B cell (primary cell): ENCODE measurements at regions of chr1 and their contacts with region 1.

Region 1: GRCh38 chr1:204506961-204507387 is 9.2 kb upstream of the MDM4 start:
- DNase-seq: peak; percentile 97
- ATAC-seq: peak; percentile 75
- H3K4me3 ChIP-seq: peak overlapping the region; percentile 51 to 90 (median 67)
- H3K4me3 Mint-ChIP-seq: peak overlapping the region; percentile 97
- H3K27ac ChIP-seq: peak overlapping the region; percentile 94 to 99
- H3K27ac Mint-ChIP-seq: peak overlapping the region; percentile 99
- H3K4me1 ChIP-seq: peaks cover 48 to 52% of the 10 kb centered on the region in 2 donors
- H3K4me1 Mint-ChIP-seq: peaks cover 62% of the 10 kb centered on the region
- H3K27me3 ChIP-seq: no peaks in the 10 kb centered on the region
- H3K27me3 Mint-ChIP-seq: no peaks in the 10 kb centered on the region
- CTCF ChIP-seq: no peak

Region 2: GRCh38 chr1:203290261-203291089 is 1216.5 kb before region 1 on chr1:
- CTCF ChIA-PET with region 1: no interaction called
- POLR2A ChIA-PET with region 1: no interaction called
- intact Hi-C with region 1: loop called (anchors 5 kb)
- DNase-seq: peak; percentile 98
- ATAC-seq: peak; percentile 40
- H3K4me3 ChIP-seq: peak overlapping the region; percentile 45 to 66 (median 56)
- H3K4me3 Mint-ChIP-seq: peak overlapping the region; percentile 88
- H3K27ac ChIP-seq: peak overlapping the region; percentile 99 to 100
- H3K27ac Mint-ChIP-seq: peak overlapping the region; percentile 95
- H3K4me1 ChIP-seq: peaks cover 70 to 90% of the 10 kb centered on the region in 2 donors
- H3K4me1 Mint-ChIP-seq: peaks cover 87% of the 10 kb centered on the region
- H3K27me3 ChIP-seq: no peaks in the 10 kb centered on the region
- H3K27me3 Mint-ChIP-seq: no peaks in the 10 kb centered on the region
- CTCF ChIP-seq: no peak

Region 3: GRCh38 chr1:204335085-204335484 is 171.9 kb before region 1 on chr1:
- CTCF ChIA-PET with region 1: no interaction called
- POLR2A ChIA-PET with region 1: no interaction called
- intact Hi-C with region 1: no loop called
- DNase-seq: no peak
- ATAC-seq: no peak
- H3K4me3 ChIP-seq: no peak overlapping the region
- H3K4me3 Mint-ChIP-seq: no peak overlapping the region
- H3K27ac ChIP-seq: no peak overlapping the region
- H3K27ac Mint-ChIP-seq: no peak overlapping the region
- H3K4me1 ChIP-seq: no peaks in the 10 kb centered on the region
- H3K4me1 Mint-ChIP-seq: no peaks in the 10 kb centered on the region
- H3K27me3 ChIP-seq: peaks cover 0 to 13% (median 1%) of the 10 kb centered on the region in 4 experiments
- H3K27me3 Mint-ChIP-seq: peaks cover 18% of the 10 kb centered on the region
- CTCF ChIP-seq: no peak

Region 4: DNA sequence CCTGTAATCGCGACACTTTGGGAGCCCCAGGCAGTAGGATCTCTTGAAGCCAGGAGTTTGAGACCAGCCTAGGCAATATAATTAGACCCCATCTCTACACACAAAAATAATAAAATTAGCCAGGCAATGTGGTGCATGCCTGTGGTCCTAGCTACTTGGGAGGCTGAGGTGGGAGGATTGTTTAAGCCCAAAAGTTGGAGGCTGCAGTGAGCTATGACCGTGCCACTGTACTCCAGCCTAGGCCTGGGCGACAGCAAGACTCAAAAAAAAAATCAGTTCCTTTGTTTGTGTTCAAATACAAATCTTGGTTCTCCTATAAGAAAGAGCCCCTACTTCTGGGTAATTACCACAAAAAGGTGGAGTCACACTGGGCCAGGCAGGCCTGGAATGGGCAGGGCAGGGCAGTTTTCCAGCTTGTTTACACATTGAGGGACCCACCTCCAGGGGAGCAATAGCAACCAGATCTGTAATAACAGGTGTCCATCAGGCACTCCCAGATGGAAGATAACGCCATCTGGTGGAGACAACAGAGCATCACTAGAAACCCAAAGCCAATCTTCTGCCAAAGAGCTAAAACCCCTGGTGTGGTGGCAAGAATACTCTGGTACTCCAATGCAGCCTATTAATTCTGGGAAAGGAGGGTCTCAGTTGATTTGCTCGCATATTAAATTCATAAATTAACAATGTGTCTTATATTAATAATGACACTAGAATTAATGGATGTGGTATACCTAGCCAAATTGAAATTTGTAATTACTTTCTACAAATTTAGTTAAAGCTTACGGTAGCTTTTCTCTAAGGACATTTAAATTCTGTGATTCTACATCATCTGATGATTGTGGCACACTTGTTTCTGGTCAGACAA is 108.5 kb before region 1 on chr1:
- CTCF ChIA-PET with region 1: interaction called, 11 read pairs
- POLR2A ChIA-PET with region 1: interaction called, 4 read pairs
- intact Hi-C with region 1: no loop called
- DNase-seq: peak; percentile 81
- ATAC-seq: peak; percentile 95
- H3K4me3 ChIP-seq: no peak overlapping the region
- H3K4me3 Mint-ChIP-seq: no peak overlapping the region
- H3K27ac ChIP-seq: peak overlapping the region; percentile 46 to 59
- H3K27ac Mint-ChIP-seq: peak overlapping the region; percentile 84
- H3K4me1 ChIP-seq: peaks cover 0 to 4% of the 10 kb centered on the region in 2 donors
- H3K4me1 Mint-ChIP-seq: peaks cover 2% of the 10 kb centered on the region
- H3K27me3 ChIP-seq: no peaks in the 10 kb centered on the region
- H3K27me3 Mint-ChIP-seq: no peaks in the 10 kb centered on the region
- CTCF ChIP-seq: peak; percentile 85

Region 5: DNA sequence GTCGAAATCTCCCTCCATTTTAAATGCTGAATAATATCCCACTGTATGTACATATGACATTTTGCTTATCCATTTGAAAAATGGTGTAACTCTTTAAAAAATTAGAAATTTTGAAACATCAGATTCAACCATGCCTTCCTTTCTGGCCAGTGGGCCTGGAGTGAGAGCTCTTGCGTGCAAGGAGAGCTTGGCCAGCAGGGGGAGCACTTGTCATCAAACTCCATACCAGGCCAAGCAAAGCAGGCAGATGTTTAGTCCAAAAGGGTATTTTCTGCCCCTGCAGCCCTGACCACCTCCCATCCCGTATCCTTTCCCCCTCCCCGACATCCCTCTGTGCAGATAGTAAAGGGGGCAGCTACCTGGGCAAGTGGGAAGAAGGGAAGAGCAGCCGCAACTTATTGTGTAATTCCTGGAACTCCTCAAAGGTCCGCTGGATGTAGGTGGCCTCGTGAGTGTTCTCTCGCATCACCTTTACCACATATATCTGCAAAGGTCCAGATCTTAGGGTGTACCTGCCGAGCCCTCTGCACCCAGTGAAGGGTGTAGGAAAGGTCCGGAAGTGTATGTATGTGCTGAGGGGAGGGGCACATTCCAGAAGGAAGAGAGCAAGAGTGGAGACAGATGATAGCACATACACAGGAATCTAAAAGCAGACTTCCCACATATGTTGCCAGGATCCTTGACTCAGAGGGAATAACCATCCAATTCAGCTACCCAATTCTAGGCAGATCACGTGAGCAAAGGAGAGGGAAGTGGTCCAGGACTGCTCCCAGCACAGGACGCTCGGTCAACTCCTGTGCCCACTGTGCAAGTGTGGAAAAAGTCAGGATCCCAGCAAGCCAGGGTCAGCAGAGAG is 75.4 kb before region 1 on chr1:
- CTCF ChIA-PET with region 1: interaction called, 1,884 read pairs
- POLR2A ChIA-PET with region 1: interaction called, 5 read pairs
- intact Hi-C with region 1: loop called (anchors 1 kb)
- DNase-seq: peak; percentile 84
- ATAC-seq: peak; percentile 77
- H3K4me3 ChIP-seq: no peak overlapping the region
- H3K4me3 Mint-ChIP-seq: no peak overlapping the region
- H3K27ac ChIP-seq: no peak overlapping the region
- H3K27ac Mint-ChIP-seq: peak overlapping the region; percentile 1
- H3K4me1 ChIP-seq: no peaks in the 10 kb centered on the region
- H3K4me1 Mint-ChIP-seq: no peaks in the 10 kb centered on the region
- H3K27me3 ChIP-seq: no peaks in the 10 kb centered on the region
- H3K27me3 Mint-ChIP-seq: no peaks in the 10 kb centered on the region
- CTCF ChIP-seq: peak; percentile 93

Region 6: DNA sequence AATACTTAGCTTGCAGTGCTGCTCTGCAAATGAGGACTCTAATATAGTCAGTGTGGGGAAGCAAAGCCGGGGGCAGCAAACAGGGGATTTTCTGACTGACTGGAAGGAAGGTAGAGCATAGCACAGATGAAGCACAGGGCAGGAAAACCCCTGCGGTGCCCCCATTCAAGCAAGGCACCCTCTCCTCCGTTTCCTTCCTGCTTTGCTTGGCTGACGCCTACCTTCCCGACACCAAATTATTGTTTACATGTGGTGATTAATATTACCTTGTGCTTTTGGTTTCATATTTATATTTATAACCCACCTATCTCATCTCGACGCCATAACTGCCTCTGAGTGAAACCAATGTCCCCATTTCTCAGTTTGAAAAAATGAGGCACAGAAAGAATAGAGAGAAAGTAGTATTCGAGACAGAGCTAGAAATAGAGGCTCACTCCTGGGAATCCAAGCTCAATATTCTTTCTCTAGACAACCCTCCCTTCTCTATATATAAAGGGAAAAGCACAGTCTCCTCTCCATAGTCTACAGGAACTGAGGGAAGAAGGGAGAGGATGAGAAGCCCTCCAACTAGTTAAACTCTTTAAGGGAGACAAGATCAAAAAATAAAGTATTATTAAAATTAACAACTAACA is 53.7 kb before region 1 on chr1:
- CTCF ChIA-PET with region 1: interaction called, 1,884 read pairs
- POLR2A ChIA-PET with region 1: interaction called, 10 read pairs
- intact Hi-C with region 1: no loop called
- DNase-seq: peak; percentile 94
- ATAC-seq: peak; percentile 90
- H3K4me3 ChIP-seq: peak overlapping the region in 3 of 5 experiments; percentile 19 to 58 (median 25)
- H3K4me3 Mint-ChIP-seq: peak overlapping the region; percentile 74
- H3K27ac ChIP-seq: peak overlapping the region; percentile 96
- H3K27ac Mint-ChIP-seq: peak overlapping the region; percentile 84
- H3K4me1 ChIP-seq: peaks cover 83 to 90% of the 10 kb centered on the region in 2 donors
- H3K4me1 Mint-ChIP-seq: peaks cover 90% of the 10 kb centered on the region
- H3K27me3 ChIP-seq: no peaks in the 10 kb centered on the region
- H3K27me3 Mint-ChIP-seq: no peaks in the 10 kb centered on the region
- CTCF ChIP-seq: no peak

Region 7: DNA sequence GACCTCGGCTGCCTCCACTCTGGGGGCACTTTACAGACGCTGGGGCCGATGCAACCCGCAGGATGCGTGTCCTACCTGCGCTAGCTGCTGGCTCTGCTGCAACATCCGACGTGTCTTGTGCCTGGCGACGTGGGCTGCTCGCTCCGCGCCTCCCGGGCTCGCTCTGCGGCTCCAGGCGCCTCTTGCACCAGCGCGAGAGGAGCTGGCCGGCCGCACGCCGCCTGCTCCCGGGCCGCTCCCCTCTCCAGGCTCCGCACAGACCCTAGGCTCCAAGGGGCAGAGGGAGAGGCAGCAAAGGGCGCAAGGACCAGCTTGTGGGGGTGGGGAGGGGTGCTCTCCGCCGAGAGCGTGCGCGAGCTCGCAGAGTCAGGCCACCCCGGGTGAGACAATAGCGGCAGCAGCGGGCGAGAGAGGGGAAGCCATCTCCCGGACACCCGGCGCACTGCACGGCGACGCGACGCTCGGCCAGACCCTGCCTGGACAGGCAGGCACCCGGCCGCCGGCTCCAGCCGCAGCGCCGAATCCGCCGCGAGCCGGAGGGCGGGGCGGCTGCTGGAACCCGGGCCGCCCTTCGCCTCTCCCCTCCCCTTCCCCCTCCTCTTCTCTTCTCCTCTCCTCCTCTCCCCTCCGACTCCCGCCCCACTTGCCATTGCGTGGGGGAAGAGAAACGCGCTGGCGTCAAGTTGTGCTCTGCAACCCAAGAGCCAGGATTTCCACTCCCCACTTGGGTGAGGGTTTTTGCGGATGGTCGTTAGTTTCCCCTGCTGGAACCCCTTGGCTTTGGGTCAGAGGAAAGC is 12.5 kb before region 1 on chr1 and contains the start of gene PIK3C2B:
- CTCF ChIA-PET with region 1: interaction called, 374 read pairs
- POLR2A ChIA-PET with region 1: interaction called, 25 read pairs
- intact Hi-C with region 1: loop called (anchors 1 kb)
- DNase-seq: peak; percentile 87
- ATAC-seq: peak; percentile 81
- H3K4me3 ChIP-seq: peak within 1 kb of the TSS; percentile 84 to 98 (median 92)
- H3K4me3 Mint-ChIP-seq: peak within 1 kb of the TSS; percentile 97
- H3K27ac ChIP-seq: peak within 1 kb of the TSS; percentile 78 to 79
- H3K27ac Mint-ChIP-seq: peak within 1 kb of the TSS; percentile 96
- H3K4me1 ChIP-seq: peaks cover 73 to 88% of the 10 kb centered on the region in 2 donors
- H3K4me1 Mint-ChIP-seq: peaks cover 80% of the 10 kb centered on the region
- H3K27me3 ChIP-seq: no peaks in the 10 kb centered on the region
- H3K27me3 Mint-ChIP-seq: no peaks in the 10 kb centered on the region
- CTCF ChIP-seq: peak; percentile 61
- total RNA-seq, gene PIK3C2B: 90.3 and 93.7 TPM in 2 replicates

Region 8: DNA sequence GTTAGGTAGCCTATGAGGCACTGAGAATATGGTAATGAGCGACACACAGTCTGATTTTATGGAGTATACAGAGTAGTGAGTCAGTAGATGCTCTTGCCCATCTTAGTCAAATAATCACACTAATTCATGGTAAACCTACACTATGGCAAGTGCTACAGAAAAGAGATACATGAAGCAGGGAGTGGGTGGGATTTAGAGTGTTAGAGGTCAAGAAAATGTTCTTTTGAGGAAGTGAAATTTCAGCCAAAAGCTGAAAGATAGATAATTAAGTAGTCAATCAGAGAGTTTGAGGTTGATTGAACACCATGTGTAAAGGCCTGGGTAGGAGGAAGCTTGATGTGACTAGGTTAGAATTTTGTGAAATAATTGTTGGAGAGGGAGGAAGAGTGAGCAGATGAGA is 24.0 kb after region 1 on chr1:
- CTCF ChIA-PET with region 1: interaction called, 32 read pairs
- POLR2A ChIA-PET with region 1: no interaction called
- intact Hi-C with region 1: no loop called
- DNase-seq: peak; percentile 44
- ATAC-seq: peak; percentile 63
- H3K4me3 ChIP-seq: no peak overlapping the region
- H3K4me3 Mint-ChIP-seq: peak overlapping the region; percentile 12
- H3K27ac ChIP-seq: peak overlapping the region; percentile 17 to 67
- H3K27ac Mint-ChIP-seq: peak overlapping the region; percentile 62
- H3K4me1 ChIP-seq: peaks cover 13 to 21% of the 10 kb centered on the region in 2 donors
- H3K4me1 Mint-ChIP-seq: peaks cover 21% of the 10 kb centered on the region
- H3K27me3 ChIP-seq: no peaks in the 10 kb centered on the region
- H3K27me3 Mint-ChIP-seq: no peaks in the 10 kb centered on the region
- CTCF ChIP-seq: no peak

Region 9: DNA sequence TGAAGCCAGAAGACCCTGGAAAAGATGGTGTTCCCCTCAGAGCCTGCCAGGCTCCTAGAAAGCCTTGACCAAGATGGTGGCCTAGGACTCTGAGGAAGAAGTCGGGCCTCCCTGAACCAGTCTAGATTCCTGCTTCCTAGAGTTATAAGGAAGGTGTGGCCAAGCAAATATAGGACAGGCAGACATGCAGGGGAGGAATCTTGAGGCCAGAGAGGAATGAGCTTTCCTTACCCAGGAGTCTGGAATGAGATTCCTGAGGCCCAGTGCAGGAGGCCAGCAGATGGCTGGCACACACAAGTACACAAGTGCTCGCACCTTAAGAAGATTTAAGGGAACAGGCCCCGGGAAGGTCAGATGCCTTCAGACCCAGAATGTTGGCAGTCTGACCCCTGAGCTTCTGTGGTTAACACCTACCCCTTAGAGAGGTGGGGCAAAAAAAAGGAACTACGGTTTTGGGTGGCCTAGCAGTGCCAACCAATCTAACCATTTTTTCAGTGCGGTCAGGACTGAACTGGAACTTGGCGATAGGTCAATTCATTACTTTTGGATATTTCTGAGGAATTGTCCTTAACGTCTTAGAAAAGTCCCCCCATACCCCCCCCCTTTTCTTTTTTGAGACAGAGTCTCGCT is 82.5 kb after region 1 on chr1:
- CTCF ChIA-PET with region 1: no interaction called
- POLR2A ChIA-PET with region 1: no interaction called
- intact Hi-C with region 1: no loop called
- DNase-seq: no peak
- ATAC-seq: peak; percentile 37
- H3K4me3 ChIP-seq: no peak overlapping the region
- H3K4me3 Mint-ChIP-seq: peak overlapping the region; percentile 29
- H3K27ac ChIP-seq: no peak overlapping the region
- H3K27ac Mint-ChIP-seq: peak overlapping the region; percentile 22
- H3K4me1 ChIP-seq: peaks cover 0 to 24% of the 10 kb centered on the region in 2 donors
- H3K4me1 Mint-ChIP-seq: peaks cover 22% of the 10 kb centered on the region
- H3K27me3 ChIP-seq: no peaks in the 10 kb centered on the region
- H3K27me3 Mint-ChIP-seq: no peaks in the 10 kb centered on the region
- CTCF ChIP-seq: no peak

Region 10: GRCh38 chr1:204894031-204894430 is 387.1 kb after region 1 on chr1:
- CTCF ChIA-PET with region 1: no interaction called
- POLR2A ChIA-PET with region 1: no interaction called
- intact Hi-C with region 1: no loop called
- DNase-seq: no peak
- ATAC-seq: no peak
- H3K4me3 ChIP-seq: no peak overlapping the region
- H3K4me3 Mint-ChIP-seq: no peak overlapping the region
- H3K27ac ChIP-seq: no peak overlapping the region
- H3K27ac Mint-ChIP-seq: no peak overlapping the region
- H3K4me1 ChIP-seq: peaks cover 11% of the 10 kb centered on the region in 2 donors
- H3K4me1 Mint-ChIP-seq: peaks cover 10% of the 10 kb centered on the region
- H3K27me3 ChIP-seq: peaks cover 0 to 19% (median 5%) of the 10 kb centered on the region in 4 experiments
- H3K27me3 Mint-ChIP-seq: peaks cover 25% of the 10 kb centered on the region
- CTCF ChIP-seq: no peak